CD8-positive, alpha-beta memory T cell (primary cell): ENCODE measurements at regions of chr7 and their contacts with region 1.

Region 1: DNA sequence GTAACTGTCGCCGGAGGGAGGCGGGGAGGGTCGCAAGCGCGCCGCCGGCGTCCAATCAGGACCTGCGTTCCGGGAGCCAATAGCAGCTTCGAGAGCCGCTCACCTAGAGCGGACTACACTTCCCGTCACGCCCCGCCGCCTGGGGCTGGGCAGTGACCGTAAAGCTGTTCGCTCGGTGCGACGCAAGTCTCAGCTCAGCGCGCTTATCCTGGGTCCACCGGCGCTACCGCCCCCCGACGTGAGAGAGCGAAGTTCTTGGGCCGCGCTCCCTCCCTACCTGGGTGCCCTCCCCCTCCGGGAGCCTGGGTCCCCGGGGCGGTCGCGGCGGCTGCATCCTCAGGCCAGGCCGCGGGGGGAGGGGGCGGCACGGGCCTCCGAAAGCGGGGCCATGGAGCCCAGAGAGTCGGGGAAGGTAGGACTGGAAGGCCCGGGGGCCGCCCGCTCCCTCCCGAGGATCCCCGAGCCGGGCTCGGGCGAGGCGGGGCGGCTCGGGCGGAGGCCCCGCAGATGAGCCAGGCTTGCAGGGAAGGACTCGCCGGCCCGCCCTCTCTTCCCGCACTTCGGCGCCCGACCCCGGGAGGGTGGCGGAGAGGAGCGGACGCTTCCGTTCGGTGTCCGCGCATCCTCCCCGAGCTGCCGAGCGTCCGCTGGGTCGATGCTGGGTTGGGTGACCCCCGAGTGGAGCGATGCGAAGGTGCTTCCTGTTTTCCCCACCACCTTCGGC is at the start of gene ZNF862:
- DNase-seq: peak; percentile 93 to 97 (median 94)
- H3K4me3 ChIP-seq: peak within 1 kb of the TSS; percentile 80
- H3K4me3 Mint-ChIP-seq: peak within 1 kb of the TSS; percentile 89 to 95 (median 92)
- H3K27ac ChIP-seq: peak within 1 kb of the TSS; percentile 55
- H3K27ac Mint-ChIP-seq: peak within 1 kb of the TSS; percentile 43 to 96 (median 86)
- H3K4me1 ChIP-seq: peaks cover 15% of the 10 kb centered on the region
- H3K4me1 Mint-ChIP-seq: peaks cover 27 to 48% (median 43%) of the 10 kb centered on the region in 3 donors
- H3K27me3 ChIP-seq: no peaks in the 10 kb centered on the region
- H3K27me3 Mint-ChIP-seq: peaks cover 7 to 13% of the 10 kb centered on the region in 2 donors
- total RNA-seq, gene ZNF862: 12.3 to 13.2 TPM

Region 2: GRCh38 chr7:149850007-149850594 is 11.7 kb after region 1 on chr7:
- CTCF ChIA-PET with region 1: interaction called, 10 read pairs
- POLR2A ChIA-PET with region 1: no interaction called
- DNase-seq: peak in 1 of 5 donors; percentile 29
- H3K4me3 ChIP-seq: no peak overlapping the region
- H3K4me3 Mint-ChIP-seq: no peak overlapping the region
- H3K27ac ChIP-seq: no peak overlapping the region
- H3K27ac Mint-ChIP-seq: no peak overlapping the region
- H3K4me1 ChIP-seq: peaks cover 16% of the 10 kb centered on the region
- H3K4me1 Mint-ChIP-seq: peaks cover 7 to 19% (median 9%) of the 10 kb centered on the region in 3 donors
- H3K27me3 ChIP-seq: no peaks in the 10 kb centered on the region
- H3K27me3 Mint-ChIP-seq: no peaks in the 10 kb centered on the region

Region 3: DNA sequence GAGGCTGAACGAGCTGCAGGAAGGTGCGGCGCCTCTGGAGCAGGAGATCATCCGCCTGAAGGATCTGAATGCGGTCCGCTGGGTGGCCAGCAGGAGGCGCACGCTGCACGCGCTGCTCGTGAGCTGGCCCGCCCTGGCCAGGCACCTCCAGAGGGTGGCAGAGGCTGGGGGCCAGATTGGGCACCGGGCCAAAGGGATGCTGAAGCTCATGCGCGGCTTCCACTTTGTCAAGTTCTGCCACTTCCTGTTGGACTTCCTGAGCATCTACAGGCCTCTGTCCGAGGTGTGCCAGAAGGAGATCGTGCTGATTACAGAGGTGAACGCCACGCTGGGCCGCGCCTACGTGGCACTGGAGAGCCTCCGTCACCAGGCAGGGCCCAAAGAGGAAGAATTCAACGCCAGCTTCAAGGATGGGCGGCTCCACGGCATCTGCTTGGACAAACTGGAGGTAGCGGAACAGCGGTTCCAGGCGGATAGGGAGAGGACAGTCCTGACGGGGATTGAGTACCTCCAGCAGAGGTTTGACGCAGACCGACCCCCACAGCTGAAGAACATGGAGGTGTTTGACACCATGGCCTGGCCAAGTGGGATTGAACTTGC is 23.2 kb after region 1 on chr7:
- CTCF ChIA-PET with region 1: interaction called, 8 read pairs
- POLR2A ChIA-PET with region 1: interaction called, 13 read pairs
- DNase-seq: peak in 1 of 5 donors; percentile 52
- H3K4me3 ChIP-seq: no peak overlapping the region
- H3K4me3 Mint-ChIP-seq: no peak overlapping the region
- H3K27ac ChIP-seq: no peak overlapping the region
- H3K27ac Mint-ChIP-seq: peak overlapping the region in 1 of 8 donors; percentile 46
- H3K4me1 ChIP-seq: peaks cover 58% of the 10 kb centered on the region
- H3K4me1 Mint-ChIP-seq: peaks cover 33 to 53% (median 49%) of the 10 kb centered on the region in 3 donors
- H3K27me3 ChIP-seq: no peaks in the 10 kb centered on the region
- H3K27me3 Mint-ChIP-seq: peaks cover 0 to 1% of the 10 kb centered on the region in 2 donors

Region 4: GRCh38 chr7:149872419-149873073 is 34.2 kb after region 1 on chr7:
- CTCF ChIA-PET with region 1: interaction called, 27 read pairs
- POLR2A ChIA-PET with region 1: interaction called, 20 read pairs
- DNase-seq: no peak
- H3K4me3 ChIP-seq: peak overlapping the region; percentile 77
- H3K4me3 Mint-ChIP-seq: peak overlapping the region; percentile 88 to 97 (median 89)
- H3K27ac ChIP-seq: peak overlapping the region; percentile 67
- H3K27ac Mint-ChIP-seq: peak overlapping the region in 7 of 8 donors; percentile 71 to 92 (median 83)
- H3K4me1 ChIP-seq: peaks cover 71% of the 10 kb centered on the region
- H3K4me1 Mint-ChIP-seq: peaks cover 71 to 83% (median 78%) of the 10 kb centered on the region in 3 donors
- H3K27me3 ChIP-seq: no peaks in the 10 kb centered on the region
- H3K27me3 Mint-ChIP-seq: no peaks in the 10 kb centered on the region